Heart right ventricle (tissue), 16 donors: ENCODE measurements at regions of chr5 and their contacts with region 1.

Region 1: DNA sequence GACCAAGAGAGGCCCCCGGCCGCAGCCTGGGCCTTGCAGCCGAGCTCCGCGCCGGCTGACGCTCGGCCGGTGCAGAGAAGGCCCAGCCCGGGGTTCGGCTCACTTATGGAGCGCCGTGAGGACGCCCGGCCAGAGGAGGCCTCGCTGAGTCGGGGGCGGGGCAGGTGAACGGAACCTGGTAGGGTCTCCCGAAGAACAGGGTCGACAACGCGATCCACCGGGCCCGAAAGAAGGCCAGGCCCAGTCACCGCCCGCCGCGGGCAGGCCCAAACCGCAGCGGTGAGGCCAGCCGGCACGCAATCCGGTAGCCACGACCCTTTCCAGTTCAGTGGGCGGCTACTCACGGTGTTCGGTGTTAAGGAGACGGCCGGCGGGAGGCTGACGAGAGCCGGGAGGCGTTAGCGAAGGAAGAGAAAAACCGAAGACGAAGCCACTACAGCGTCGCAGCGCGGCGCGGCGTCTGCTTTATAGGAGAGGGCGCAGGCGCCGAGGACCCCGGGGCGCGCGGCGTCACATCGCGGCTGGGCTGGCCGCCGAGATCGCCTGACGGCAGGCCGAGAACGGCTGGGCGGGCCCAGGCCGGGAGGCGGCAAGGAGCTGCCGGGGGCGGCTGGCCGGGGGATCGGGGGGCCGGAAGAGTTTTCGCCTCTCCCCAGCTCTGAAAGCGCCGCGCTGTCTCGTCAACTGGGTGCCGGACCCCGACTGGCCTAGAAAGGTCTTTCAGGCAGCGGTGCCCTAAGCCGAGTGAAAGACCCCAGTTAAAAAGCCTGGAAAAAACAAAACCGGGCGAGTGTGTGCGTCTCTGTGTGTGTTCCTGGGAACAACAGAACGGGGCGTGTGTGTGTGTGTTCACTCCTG is at the start of gene SKP1:
- DNase-seq: peak; percentile 84 to 87
- ATAC-seq: peak; percentile 89 to 95 (median 92)
- H3K4me3 ChIP-seq: peak within 1 kb of the TSS; percentile 57 to 99 (median 86)
- H3K27ac ChIP-seq: peak within 1 kb of the TSS; percentile 97 to 100 (median 100)
- H3K4me1 ChIP-seq: peaks cover 6 to 51% (median 40%) of the 10 kb centered on the region in 9 donors
- H3K27me3 ChIP-seq: no peaks in the 10 kb centered on the region
- CTCF ChIP-seq: peak in 1 of 9 donors; percentile 4
- total RNA-seq, gene SKP1: 424 to 543 (median 483) TPM

Region 2: GRCh38 chr5:134038138-134038537 is 138.6 kb before region 1 on chr5:
- intact Hi-C with region 1: no loop called
- DNase-seq: no peak
- ATAC-seq: no peak
- H3K4me3 ChIP-seq: no peak overlapping the region
- H3K27ac ChIP-seq: no peak overlapping the region
- H3K4me1 ChIP-seq: no peaks in the 10 kb centered on the region
- H3K27me3 ChIP-seq: no peaks in the 10 kb centered on the region
- CTCF ChIP-seq: no peak

Region 3: GRCh38 chr5:134153657-134154056 is 23.1 kb before region 1 on chr5:
- intact Hi-C with region 1: no loop called
- DNase-seq: no peak
- ATAC-seq: no peak
- H3K4me3 ChIP-seq: no peak overlapping the region
- H3K27ac ChIP-seq: no peak overlapping the region
- H3K4me1 ChIP-seq: peaks cover 4 to 37% (median 27%) of the 10 kb centered on the region in 9 donors
- H3K27me3 ChIP-seq: no peaks in the 10 kb centered on the region
- CTCF ChIP-seq: no peak

Region 4: DNA sequence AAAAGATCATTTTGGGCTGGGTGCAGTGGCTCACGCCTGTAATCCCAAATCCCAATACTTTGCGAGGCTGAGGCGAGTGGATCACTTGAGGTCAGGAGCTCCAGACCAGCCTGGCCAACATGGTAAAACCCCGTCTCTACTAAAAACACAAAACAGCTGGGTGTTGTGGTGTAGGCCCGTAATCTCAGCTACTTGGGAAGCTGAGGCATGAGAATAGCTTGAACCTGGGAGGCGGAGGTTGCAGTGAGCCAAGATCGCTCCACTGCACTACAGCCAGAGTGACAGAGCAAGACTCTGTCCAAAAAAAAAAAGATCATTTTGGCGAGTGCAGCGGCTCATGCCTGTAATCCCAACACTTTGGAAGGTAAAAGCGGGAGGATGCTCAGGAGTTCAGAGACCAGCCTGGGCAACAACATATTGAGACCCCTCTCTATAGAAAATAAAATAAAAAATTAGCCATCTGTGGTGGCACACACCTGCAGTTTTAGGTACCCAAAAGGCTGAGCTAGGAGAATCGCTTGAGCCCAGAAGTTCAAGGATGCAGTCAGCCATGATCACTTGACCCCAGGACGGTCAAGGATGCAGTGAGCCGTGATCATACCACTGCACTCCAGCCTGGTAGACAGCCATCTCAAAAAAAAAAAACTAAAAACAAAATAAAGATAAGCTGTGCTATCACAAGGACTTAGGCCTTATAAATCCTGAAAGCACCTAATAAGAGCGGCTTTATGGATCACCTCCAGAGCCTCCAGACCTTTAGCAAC is 32.9 kb after region 1 on chr5:
- intact Hi-C with region 1: no loop called
- DNase-seq: peak in 1 of 2 donors; percentile 12
- ATAC-seq: peak; percentile 40 to 75 (median 52)
- H3K4me3 ChIP-seq: no peak overlapping the region
- H3K27ac ChIP-seq: peak overlapping the region in 6 of 10 donors; percentile 4 to 69 (median 35)
- H3K4me1 ChIP-seq: peaks cover 0 to 86% (median 64%) of the 10 kb centered on the region in 9 donors
- H3K27me3 ChIP-seq: no peaks in the 10 kb centered on the region
- CTCF ChIP-seq: no peak

Region 5: GRCh38 chr5:134225618-134226440 is 49.1 kb after region 1 on chr5 and contains the start of gene PPP2CA:
- intact Hi-C with region 1: loop called in 2 of 10 experiments (anchors 5 kb)
- DNase-seq: peak; percentile 99
- ATAC-seq: peak; percentile 93 to 98 (median 96)
- H3K4me3 ChIP-seq: peak within 1 kb of the TSS; percentile 74 to 99 (median 86)
- H3K27ac ChIP-seq: peak within 1 kb of the TSS; percentile 95 to 100 (median 98)
- H3K4me1 ChIP-seq: peaks cover 0 to 68% (median 53%) of the 10 kb centered on the region in 9 donors
- H3K27me3 ChIP-seq: no peaks in the 10 kb centered on the region
- CTCF ChIP-seq: peak in 1 of 9 donors; percentile 12
- total RNA-seq, gene PPP2CA: 136 to 249 (median 184) TPM

Region 6: DNA sequence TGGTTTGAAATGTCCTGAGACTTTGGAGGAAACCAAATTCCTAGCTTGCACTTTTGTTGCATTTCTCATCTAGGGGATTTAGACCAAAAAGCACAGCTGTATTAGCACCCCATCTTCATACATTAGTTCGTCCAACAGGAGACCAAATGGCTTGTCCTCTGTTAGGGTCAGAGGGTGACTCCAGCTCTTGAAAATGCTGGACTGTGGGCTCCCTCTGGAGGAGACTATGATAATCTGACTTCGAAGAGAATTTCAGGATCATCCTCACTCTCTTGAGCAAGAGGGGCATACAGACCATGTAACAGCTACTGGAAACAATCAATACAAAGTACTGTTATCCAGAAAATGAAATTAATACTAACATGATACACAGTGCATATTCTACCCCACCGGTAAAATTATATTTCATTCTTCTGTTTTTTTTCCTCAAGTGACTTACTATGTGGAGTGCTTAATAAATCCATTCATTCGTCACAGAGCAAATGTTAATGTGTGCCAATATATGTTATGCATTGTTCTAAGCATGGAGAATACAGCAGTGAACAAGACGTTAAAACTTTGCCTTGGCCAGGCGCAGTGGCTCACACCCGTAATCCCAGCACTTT is 112.9 kb after region 1 on chr5:
- intact Hi-C with region 1: no loop called
- DNase-seq: peak in 1 of 2 donors; percentile 71
- ATAC-seq: peak; percentile 86 to 97 (median 94)
- H3K4me3 ChIP-seq: no peak overlapping the region
- H3K27ac ChIP-seq: no peak overlapping the region
- H3K4me1 ChIP-seq: peaks cover 0 to 3% (median 0%) of the 10 kb centered on the region in 9 donors
- H3K27me3 ChIP-seq: no peaks in the 10 kb centered on the region
- CTCF ChIP-seq: peak; percentile 39 to 89 (median 74)

Region 7: DNA sequence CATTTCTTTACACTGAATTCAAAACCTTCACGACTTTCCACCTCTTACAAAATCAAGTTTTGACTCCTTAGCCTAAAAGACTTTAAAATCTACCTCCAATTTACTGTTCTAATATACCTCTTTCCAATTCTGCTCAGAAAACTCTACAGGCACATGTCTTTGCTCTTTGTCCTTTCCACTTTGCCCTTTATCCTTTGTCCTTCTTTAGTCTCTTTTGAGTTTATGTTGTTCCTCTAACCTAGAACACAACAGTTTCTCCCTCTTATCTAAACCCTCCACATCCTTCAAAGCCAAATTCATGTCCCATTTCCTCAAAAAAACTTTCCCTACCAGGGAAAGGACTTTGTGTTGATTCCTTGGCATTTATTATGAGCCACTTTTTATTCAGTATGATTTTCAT is 188.9 kb after region 1 on chr5:
- intact Hi-C with region 1: loop called in 2 of 10 experiments (anchors 10 kb)
- DNase-seq: no peak
- ATAC-seq: no peak
- H3K4me3 ChIP-seq: no peak overlapping the region
- H3K27ac ChIP-seq: no peak overlapping the region
- H3K4me1 ChIP-seq: peaks cover 0 to 36% (median 25%) of the 10 kb centered on the region in 9 donors
- H3K27me3 ChIP-seq: no peaks in the 10 kb centered on the region
- CTCF ChIP-seq: no peak